PC-3 (cell line): ENCODE measurements at regions of chr9 and their contacts with region 1.

Region 1: DNA sequence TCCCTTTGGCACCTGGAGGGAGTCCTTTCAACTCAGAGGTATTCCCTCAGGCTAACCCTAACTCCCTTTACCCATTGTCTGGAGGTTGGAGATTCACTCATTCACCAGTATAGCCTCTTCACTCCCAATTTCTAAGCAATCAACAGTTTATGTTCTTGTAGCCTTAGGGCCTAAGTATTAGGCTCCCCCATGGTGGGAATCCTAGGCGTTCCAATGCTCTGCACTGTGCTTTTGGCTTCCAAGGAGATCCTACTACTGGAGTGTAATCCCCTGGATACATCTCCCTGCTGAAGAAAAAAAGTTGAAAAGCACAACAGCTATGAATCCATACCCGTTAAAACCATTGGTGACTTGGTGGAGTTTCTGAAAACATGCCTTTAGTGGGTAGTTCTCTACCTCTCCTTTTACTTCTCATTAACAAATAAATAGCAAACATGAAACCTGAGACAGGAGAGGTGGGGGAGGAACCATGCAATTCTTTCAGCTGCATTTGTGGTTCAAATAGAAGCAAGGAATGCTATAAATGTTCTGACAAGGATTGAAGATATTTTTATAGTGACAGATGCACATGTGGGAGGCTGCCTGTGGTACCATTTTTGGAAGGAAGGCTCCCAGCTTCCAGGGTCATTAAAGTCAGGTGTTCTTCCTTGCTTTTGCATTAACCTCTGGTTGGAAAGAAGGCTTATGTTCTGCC is 397.1 kb downstream of the DMAC1 start:
- DNase-seq: no peak
- ATAC-seq: no peak
- H3K4me3 ChIP-seq: no peak overlapping the region
- H3K27ac ChIP-seq: no peak overlapping the region
- H3K4me1 ChIP-seq: no peaks in the 10 kb centered on the region
- H3K27me3 ChIP-seq: no peaks in the 10 kb centered on the region
- CTCF ChIP-seq: no peak

Region 2: GRCh38 chr9:7656636-7657035 is 254.2 kb after region 1 on chr9:
- CTCF ChIA-PET with region 1: no interaction called
- POLR2A ChIA-PET with region 1: no interaction called
- intact Hi-C with region 1: loop called (anchors 5 kb)
- DNase-seq: peak; percentile 3
- ATAC-seq: no peak
- H3K4me3 ChIP-seq: no peak overlapping the region
- H3K27ac ChIP-seq: no peak overlapping the region
- H3K4me1 ChIP-seq: no peaks in the 10 kb centered on the region
- H3K27me3 ChIP-seq: no peaks in the 10 kb centered on the region
- CTCF ChIP-seq: no peak